Naive thymus-derived CD8-positive, alpha-beta T cell (primary cell): ENCODE measurements at regions of chr10 and their contacts with region 1.

Region 1: DNA sequence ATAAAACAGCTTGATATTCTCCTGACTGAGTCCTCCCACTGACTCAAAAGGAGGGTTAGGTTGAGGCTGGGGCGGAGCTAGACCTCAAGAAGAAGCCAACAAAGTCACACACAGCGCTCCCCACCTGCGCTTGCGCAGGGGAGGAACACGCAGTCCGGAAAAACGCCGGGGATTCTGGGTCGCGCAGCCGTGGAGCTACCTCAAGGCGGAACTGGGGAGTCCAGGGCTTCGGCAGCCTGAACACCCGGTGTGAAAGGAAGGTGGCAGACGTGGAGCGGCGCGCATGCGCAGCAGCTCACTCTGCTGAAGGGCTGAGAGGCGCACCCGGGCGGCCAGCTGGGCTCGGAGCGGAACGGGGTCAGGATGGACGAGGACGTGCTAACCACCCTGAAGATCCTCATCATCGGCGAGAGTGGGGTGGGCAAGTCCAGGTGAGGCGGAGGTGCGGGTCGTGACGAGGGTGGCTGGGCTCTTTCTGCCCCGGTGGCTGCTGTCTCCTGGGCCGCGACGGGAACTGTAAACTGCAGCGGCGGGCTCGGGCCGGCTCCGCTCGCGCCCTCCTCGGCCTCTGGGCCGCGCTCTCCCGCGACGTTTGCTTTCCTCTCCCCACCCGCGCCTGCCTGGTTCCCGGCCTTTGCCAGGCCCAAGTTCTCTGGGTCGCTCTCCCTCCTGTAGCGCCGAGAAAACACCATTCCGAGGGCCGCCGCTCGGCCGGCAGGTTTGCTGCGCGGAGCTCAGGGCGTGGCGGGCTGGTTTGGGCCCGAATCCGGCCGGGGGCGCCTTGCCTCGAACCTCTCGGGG is at the start of gene RAB18:
- DNase-seq: peak; percentile 94 to 100 (median 98)
- ATAC-seq: peak; percentile 94
- H3K4me3 Mint-ChIP-seq: peak within 1 kb of the TSS; percentile 96 to 100 (median 99)
- H3K27ac Mint-ChIP-seq: peak within 1 kb of the TSS; percentile 96 to 100 (median 99)
- H3K4me1 Mint-ChIP-seq: peaks cover 23 to 53% (median 51%) of the 10 kb centered on the region in 4 donors
- H3K27me3 Mint-ChIP-seq: peaks cover 0 to 3% (median 0%) of the 10 kb centered on the region in 5 donors
- polyA plus RNA-seq, gene RAB18: 65.4 to 82.4 (median 76.3) TPM

Region 2: GRCh38 chr10:27464993-27465392 is 39.2 kb before region 1 on chr10:
- POLR2A ChIA-PET with region 1: interaction called, 19 read pairs
- DNase-seq: peak in 6 of 10 donors; percentile 3 to 66 (median 26)
- ATAC-seq: peak; percentile 95
- H3K4me3 Mint-ChIP-seq: peak overlapping the region; percentile 5 to 71 (median 62)
- H3K27ac Mint-ChIP-seq: peak overlapping the region; percentile 27 to 89 (median 76)
- H3K4me1 Mint-ChIP-seq: peaks cover 27 to 39% (median 32%) of the 10 kb centered on the region in 4 donors
- H3K27me3 Mint-ChIP-seq: no peaks in the 10 kb centered on the region